ENCODE measurements at regions of chr2 and their contacts with region 1.

Region 1: DNA sequence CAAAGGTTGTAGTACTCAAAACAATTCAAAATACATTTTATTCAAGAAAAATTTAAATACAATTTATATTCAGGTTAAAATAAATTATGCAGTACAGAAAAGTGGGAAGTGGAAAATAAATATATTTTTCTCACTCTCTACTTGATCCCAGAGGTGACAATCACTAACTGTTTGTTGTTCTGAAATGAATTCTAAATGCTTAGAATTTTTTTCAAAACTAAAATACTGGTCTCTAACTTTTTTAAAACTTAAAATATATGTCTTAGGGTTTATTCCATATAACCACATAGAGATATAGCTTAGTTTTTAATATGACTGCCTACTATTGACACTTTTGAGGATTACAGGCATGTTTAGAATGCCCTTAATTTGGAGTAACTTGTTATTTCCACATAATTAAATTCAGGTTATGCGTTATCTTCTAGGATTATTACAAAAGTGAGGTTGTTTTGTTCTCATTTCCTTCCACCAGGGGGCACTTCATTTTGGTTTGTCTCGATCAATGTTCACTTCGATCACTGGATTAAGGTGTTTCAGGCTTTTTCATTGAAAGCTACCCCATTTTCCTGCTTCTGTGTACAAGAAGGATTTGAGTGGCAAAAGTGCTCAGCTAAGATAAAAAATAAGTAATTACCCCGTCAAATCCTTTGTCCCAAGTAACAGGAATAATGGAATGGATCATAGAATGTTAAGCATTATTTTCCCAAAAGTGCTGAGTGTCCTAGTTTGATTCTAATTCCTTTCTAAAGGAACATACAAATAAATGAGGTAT is 27.1 kb upstream of the TFPI start:
- DNase-seq: peak; percentile 75
- ATAC-seq: peak; percentile 37
- H3K4me3 ChIP-seq: peak overlapping the region; percentile 35
- H3K27ac ChIP-seq: peak overlapping the region; percentile 72
- H3K4me1 ChIP-seq: peaks cover 23% of the 10 kb centered on the region
- H3K27me3 ChIP-seq: no peaks in the 10 kb centered on the region
- CTCF ChIP-seq: peak; percentile 82

Region 2: DNA sequence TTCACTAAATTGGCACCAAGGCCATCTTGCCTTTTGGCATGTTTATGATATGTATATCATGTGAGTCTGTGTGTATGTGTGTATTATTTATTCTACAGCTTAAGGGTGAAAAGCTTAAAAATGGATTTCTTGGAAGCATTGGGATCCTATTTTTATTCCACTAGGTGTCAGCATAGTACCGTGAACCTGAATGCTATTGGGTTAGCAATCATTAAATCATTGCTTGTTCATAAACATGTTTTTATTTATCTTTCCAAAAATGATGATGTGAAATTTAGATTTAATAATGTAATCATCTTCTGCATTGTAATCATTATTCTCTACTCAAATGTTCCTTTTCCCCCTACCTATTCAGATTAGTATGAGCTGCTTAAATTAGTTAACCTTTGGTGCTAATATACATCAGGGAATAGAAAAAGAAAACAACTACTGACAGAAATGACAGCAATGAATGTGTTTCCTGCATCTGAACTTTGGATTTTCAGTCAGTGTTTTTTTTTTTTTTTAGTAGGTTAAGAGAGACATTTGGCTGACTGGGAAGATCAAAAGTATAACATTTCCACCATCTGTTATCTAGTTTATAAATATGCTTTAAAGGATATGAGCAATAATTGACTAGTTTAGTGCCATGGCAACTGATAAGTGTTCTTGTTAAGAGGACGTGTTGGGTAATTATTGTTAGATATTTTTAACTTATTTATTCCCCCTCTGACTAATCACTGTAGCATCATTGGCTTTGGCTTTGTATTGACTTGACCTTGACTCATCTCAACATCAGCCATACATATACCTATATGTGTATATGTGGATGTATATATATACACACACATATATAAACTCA is 718.2 kb before region 1 on chr2:
- CTCF ChIA-PET with region 1: no interaction called
- POLR2A ChIA-PET with region 1: no interaction called
- intact Hi-C with region 1: loop called (anchors 2 kb)
- DNase-seq: peak; percentile 71
- ATAC-seq: peak; percentile 78
- H3K4me3 ChIP-seq: no peak overlapping the region
- H3K27ac ChIP-seq: no peak overlapping the region
- H3K4me1 ChIP-seq: no peaks in the 10 kb centered on the region
- H3K27me3 ChIP-seq: peaks cover 3% of the 10 kb centered on the region; the same call in 1 of the 2 replicates
- CTCF ChIP-seq: peak; percentile 89

Region 3: DNA sequence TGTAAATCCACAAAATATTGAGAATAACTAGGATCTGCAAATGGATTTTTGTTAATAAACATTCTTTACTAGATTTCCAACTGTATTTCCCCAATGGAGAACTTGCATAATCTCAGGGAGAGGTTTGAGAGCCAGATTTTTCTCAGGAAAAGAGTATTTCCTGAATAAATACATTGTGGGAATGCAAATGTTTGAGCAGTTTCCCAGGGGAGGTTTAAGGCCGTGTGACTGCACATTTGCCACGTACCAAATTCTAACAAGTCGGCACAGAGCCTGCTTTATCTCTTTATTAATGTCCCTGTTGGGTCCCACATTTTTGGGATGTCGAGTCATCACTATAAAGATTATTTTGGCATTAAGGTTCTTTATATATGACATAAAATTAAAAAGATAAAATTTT is 54.0 kb before region 1 on chr2:
- CTCF ChIA-PET with region 1: interaction called, 4 read pairs
- POLR2A ChIA-PET with region 1: no interaction called
- intact Hi-C with region 1: loop called (anchors 1 kb)
- DNase-seq: peak; percentile 83
- ATAC-seq: peak; percentile 52
- H3K4me3 ChIP-seq: peak overlapping the region; percentile 3; the same call in 1 of the 2 replicates
- H3K27ac ChIP-seq: peak overlapping the region; percentile 96
- H3K4me1 ChIP-seq: peaks cover 52% of the 10 kb centered on the region
- H3K27me3 ChIP-seq: no peaks in the 10 kb centered on the region
- CTCF ChIP-seq: no peak

Region 4: GRCh38 chr2:187541086-187542085 is 39.9 kb before region 1 on chr2:
- CTCF ChIA-PET with region 1: interaction called, 3 read pairs
- POLR2A ChIA-PET with region 1: no interaction called
- intact Hi-C with region 1: loop called (anchors 2 kb)
- DNase-seq: peak; percentile 94
- ATAC-seq: peak; percentile 67
- H3K4me3 ChIP-seq: peak overlapping the region; percentile 28; the same call in 1 of the 2 replicates
- H3K27ac ChIP-seq: peak overlapping the region; percentile 97
- H3K4me1 ChIP-seq: peaks cover 71% of the 10 kb centered on the region
- H3K27me3 ChIP-seq: no peaks in the 10 kb centered on the region
- CTCF ChIP-seq: no peak; the same call in 1 of the 2 replicates

Region 5: GRCh38 chr2:187710791-187711521 is 129.6 kb after region 1 on chr2:
- CTCF ChIA-PET with region 1: no interaction called
- POLR2A ChIA-PET with region 1: no interaction called
- intact Hi-C with region 1: no loop called
- DNase-seq: peak; percentile 22
- ATAC-seq: no peak
- H3K4me3 ChIP-seq: no peak overlapping the region
- H3K27ac ChIP-seq: no peak overlapping the region
- H3K4me1 ChIP-seq: no peaks in the 10 kb centered on the region
- H3K27me3 ChIP-seq: no peaks in the 10 kb centered on the region
- CTCF ChIP-seq: no peak

Region 6: DNA sequence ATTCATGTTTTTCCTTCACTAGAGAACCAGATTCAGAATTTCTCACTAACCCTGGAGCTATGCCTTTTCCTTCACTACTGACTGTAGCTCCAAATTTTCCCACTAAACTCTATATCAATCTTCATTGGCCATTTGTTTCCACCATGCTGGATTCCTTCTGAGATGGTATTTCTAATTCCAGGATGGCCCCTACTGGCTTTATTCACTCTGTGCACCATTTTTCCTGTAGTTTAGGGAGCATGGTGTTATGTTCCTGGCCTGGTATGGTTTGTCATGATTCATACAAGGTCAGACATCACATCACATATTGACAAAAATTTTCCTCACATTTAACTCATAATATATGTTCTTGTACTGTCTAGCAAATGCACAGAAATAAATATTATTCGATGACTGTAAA is 202.1 kb after region 1 on chr2:
- CTCF ChIA-PET with region 1: no interaction called
- POLR2A ChIA-PET with region 1: no interaction called
- intact Hi-C with region 1: loop called (anchors 1 kb)
- DNase-seq: peak; percentile 13
- ATAC-seq: peak; percentile 67
- H3K4me3 ChIP-seq: no peak overlapping the region
- H3K27ac ChIP-seq: no peak overlapping the region
- H3K4me1 ChIP-seq: no peaks in the 10 kb centered on the region
- H3K27me3 ChIP-seq: no peaks in the 10 kb centered on the region
- CTCF ChIP-seq: peak; percentile 33; the same call in 1 of the 2 replicates

Region 7: GRCh38 chr2:187842978-187843847 is 261.9 kb after region 1 on chr2:
- CTCF ChIA-PET with region 1: interaction called, 3 read pairs
- POLR2A ChIA-PET with region 1: no interaction called
- intact Hi-C with region 1: loop called (anchors 1 kb)
- DNase-seq: peak; percentile 86
- ATAC-seq: peak; percentile 79
- H3K4me3 ChIP-seq: no peak overlapping the region
- H3K27ac ChIP-seq: no peak overlapping the region
- H3K4me1 ChIP-seq: no peaks in the 10 kb centered on the region
- H3K27me3 ChIP-seq: no peaks in the 10 kb centered on the region
- CTCF ChIP-seq: peak; percentile 79

Measured in PC-3 (cell line).